AG04449 (cell line): ENCODE measurements at regions of chr4 and their contacts with region 1.

Region 1: DNA sequence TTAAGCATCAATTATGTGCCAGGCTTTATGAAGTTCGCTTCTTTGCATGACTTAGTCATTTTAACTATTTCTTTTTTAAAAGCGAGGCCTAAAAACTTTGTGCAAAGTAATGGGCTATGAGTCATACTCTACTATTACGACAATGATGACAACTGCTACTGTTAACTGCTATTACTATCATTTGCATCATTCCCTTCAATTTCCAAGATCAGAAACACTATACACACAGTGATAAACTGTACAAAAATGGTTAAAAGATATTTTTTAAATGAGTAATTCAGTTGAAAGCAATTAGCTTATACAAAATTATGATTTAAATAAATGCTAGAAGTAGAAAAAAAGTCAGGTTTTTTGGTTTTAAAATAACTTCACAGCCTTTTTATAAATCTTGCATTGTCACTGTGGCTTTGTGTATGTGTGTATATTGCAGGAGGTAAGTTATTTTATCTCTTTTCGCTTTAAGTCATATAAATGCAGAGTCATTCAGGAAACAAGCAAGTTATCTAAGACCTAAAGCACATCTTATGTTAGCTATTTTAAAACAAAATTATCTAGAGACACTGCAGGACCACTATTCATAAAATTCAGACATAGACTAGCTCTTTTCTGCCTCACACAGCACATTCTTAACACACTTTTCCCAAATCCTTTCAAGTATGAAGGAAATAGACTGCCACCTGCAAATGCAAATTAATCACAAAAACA is 18.5 kb upstream of the CXCL3 start:
- DNase-seq: peak; percentile 41
- H3K4me3 ChIP-seq: no peak overlapping the region
- CTCF ChIP-seq: no peak

Region 2: GRCh38 chr4:74038161-74039064 is 18.6 kb before region 1 on chr4 and contains the start of gene CXCL3:
- CTCF ChIA-PET with region 1: interaction called, 13 read pairs
- POLR2A ChIA-PET with region 1: interaction called, 3 read pairs
- DNase-seq: no peak
- H3K4me3 ChIP-seq: peak within 1 kb of the TSS; percentile 71
- CTCF ChIP-seq: peak; percentile 11